Activated T-helper 1 cell treated with anti-CD3 and anti-CD28 coated beads, Interleukin-12 subunit alpha, Interleukin-12 subunit beta, Interleukin-2, Interleukin-4 antibody, amounts not matched to agents 30 ng/mL and 10 ng/mL and 1 ng/mL, durations not matched to agents 14 hours and 24 hours and 36 hours (primary cell): ENCODE measurements at regions of chr3 and their contacts with region 1.

Region 1: DNA sequence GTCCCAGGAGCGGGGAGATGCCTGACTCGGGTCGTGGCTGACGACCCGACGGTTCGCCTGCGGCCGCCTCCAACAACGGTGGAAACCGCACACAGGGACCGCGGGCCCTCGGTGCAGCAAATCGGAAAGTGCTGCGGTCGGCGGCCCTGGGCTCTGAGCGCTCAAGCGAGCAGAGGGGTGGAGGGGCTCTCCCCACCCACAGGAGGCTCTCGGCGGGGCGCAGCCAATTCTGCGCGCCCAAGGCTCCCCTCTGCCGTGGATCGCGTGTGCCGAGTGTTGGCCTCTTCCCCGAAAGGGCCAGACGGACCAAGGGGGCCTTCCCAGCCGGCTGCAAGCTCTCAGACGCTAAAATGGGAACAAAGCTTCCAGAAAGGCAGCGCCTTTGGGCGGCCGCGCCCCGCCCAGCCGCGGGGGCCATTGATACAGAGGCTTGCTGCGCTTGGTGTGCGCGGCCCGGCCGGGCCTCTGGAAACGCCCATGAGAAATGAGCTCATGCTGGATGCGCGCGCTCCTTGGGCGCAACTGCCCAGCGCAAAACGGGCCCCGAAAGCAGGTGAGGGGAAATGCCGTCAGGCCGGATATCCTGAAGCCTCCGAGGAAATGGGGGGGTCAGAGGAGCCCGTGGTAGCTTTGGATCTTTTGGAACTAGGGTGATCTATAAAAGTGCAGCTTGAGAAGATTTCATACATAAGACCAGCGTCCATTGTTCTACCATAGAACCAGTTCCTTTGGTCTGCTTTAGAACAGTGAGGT is 1.2 kb upstream of the GSK3B start:
- DNase-seq: peak; percentile 91
- H3K4me3 Mint-ChIP-seq: no peak overlapping the region
- H3K27ac Mint-ChIP-seq: no peak overlapping the region
- H3K4me1 Mint-ChIP-seq: peaks cover 19% of the 10 kb centered on the region
- H3K27me3 Mint-ChIP-seq: no peaks in the 10 kb centered on the region

Region 2: DNA sequence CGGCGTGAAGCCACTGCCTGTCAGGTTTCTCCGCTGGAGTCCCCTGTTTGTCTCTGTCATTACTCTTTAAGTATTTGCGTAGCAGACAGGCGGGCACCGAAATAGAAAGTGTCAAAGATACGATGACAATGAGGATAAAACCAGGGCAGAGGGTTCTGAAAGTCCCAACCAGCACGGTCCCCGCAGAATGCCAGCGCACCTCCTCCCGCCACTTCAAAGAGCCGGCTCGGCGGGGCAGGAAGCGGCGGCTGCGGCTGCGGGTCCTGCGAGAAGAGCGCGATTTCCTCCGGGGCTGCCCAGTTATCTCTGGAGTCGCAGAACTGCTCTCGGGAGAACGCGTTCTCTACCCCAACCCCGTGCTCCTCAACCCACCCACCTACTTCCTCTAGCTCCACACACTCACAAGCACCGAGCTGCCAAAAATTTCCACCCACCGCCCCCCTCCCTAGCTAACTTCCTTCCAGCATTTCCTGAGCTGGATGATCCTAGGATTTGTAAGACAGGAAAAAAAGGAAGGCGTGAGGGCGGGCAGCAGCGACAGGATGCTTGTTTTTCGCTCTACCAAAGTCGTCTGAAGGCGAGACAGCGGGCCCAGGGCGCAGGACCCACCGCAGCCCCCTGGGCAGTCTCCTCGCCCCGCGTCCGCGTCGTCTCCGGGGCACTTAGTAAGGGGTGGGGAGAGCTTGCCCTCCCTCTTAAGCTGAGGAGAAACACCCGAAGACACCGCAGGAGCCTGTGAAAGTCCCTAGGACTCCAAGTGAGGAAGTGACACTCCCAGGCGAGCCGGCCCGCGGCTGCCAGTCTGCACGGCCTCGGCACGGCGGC is 801.3 kb before region 1 on chr3 and contains the start of gene ARHGAP31:
- intact Hi-C with region 1: loop called (anchors 2 kb)
- DNase-seq: peak; percentile 82
- H3K4me3 Mint-ChIP-seq: peak within 1 kb of the TSS; percentile 85
- H3K27ac Mint-ChIP-seq: peak within 1 kb of the TSS; percentile 78
- H3K4me1 Mint-ChIP-seq: peaks cover 55% of the 10 kb centered on the region
- H3K27me3 Mint-ChIP-seq: peaks cover 42% of the 10 kb centered on the region
- total RNA-seq, gene ARHGAP31: 7.5 and 8.0 TPM in 2 replicates

Region 3: DNA sequence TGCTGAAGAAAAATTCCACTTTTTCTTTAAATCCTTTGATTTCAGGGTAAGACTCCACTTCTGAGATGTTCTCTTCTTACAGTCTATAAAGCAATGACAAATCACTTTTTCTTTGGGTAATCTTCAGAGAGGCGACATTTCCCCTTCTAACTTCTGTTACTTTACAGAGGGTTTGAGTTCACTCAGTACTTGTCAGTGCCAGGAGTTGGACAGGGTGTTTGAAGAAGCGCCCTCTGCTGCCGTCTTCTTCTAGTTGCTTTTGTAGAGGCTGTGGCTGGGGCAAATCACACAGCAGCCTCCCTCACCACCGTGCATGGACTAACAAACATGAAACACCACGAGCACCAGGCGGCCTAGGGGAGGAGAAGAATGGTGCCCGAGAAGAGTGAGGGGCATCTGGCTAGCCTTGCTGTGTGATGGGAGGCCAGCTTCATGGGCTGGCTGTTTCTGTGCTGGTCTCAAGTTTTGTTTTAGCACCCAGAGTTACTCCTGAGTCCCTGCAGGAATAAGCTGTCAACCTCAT is 535.9 kb before region 1 on chr3 and contains the start of gene CD80:
- intact Hi-C with region 1: loop called (anchors 10 kb)
- DNase-seq: peak; percentile 67
- H3K4me3 Mint-ChIP-seq: peak within 1 kb of the TSS; percentile 79
- H3K27ac Mint-ChIP-seq: peak within 1 kb of the TSS; percentile 88
- H3K4me1 Mint-ChIP-seq: peaks cover 73% of the 10 kb centered on the region
- H3K27me3 Mint-ChIP-seq: peaks cover 4% of the 10 kb centered on the region
- total RNA-seq, gene CD80: 18.1 and 19.5 TPM in 2 replicates

Region 4: GRCh38 chr3:119912220-119912619 is 183.2 kb before region 1 on chr3:
- intact Hi-C with region 1: loop called (anchors 1 kb)
- DNase-seq: no peak
- H3K4me3 Mint-ChIP-seq: no peak overlapping the region
- H3K27ac Mint-ChIP-seq: peak overlapping the region; percentile 59
- H3K4me1 Mint-ChIP-seq: peaks cover 21% of the 10 kb centered on the region
- H3K27me3 Mint-ChIP-seq: peaks cover 1% of the 10 kb centered on the region

Region 5: GRCh38 chr3:120417272-120417911 is 322.0 kb after region 1 on chr3:
- intact Hi-C with region 1: loop called (anchors 1 kb)
- DNase-seq: peak; percentile 78
- H3K4me3 Mint-ChIP-seq: peak overlapping the region; percentile 84
- H3K27ac Mint-ChIP-seq: no peak overlapping the region
- H3K4me1 Mint-ChIP-seq: peaks cover 22% of the 10 kb centered on the region
- H3K27me3 Mint-ChIP-seq: peaks cover 2% of the 10 kb centered on the region

Region 6: DNA sequence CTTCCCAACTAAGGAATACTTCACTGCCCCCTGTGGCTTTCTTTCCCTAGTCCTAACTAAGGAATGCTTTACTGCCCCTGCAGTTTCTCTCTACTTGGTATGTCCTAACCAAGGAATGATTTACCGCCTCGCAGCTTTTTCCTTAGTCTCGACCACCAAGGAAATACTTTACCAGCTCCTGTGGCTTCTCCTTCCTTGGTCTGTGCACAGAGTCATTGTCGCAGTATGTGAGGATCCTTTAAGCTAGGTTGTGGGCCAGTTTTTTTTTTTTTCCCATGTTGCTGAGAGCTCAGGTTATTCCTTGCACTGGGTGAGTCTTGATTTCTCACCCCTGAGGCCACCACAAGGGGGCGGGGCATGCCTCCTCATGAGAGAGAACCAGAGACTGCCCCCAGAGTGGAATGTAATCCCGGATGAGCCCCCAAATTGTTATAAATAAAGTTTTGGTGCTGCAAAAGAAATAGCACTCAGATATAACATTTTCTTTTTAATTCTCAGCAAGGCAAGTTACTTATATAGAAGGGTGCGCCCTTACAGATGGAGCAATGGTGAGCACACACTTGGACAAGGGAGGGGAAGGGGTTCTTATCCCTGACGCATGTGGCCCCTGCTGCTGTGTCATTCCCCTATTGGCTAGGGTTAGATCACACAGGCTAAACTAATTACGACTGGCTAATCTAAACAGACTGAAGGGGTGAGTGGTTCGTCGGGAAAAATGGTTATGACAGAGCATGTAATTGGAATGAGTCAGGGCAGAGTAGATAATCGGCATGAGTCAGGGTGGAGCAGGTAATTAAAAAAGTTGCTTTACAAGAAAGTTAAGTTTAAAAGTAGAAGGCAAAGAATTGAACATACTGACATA is 527.7 kb after region 1 on chr3:
- intact Hi-C with region 1: no loop called
- DNase-seq: no peak
- H3K4me3 Mint-ChIP-seq: no peak overlapping the region
- H3K27ac Mint-ChIP-seq: no peak overlapping the region
- H3K4me1 Mint-ChIP-seq: no peaks in the 10 kb centered on the region
- H3K27me3 Mint-ChIP-seq: no peaks in the 10 kb centered on the region

Region 7: DNA sequence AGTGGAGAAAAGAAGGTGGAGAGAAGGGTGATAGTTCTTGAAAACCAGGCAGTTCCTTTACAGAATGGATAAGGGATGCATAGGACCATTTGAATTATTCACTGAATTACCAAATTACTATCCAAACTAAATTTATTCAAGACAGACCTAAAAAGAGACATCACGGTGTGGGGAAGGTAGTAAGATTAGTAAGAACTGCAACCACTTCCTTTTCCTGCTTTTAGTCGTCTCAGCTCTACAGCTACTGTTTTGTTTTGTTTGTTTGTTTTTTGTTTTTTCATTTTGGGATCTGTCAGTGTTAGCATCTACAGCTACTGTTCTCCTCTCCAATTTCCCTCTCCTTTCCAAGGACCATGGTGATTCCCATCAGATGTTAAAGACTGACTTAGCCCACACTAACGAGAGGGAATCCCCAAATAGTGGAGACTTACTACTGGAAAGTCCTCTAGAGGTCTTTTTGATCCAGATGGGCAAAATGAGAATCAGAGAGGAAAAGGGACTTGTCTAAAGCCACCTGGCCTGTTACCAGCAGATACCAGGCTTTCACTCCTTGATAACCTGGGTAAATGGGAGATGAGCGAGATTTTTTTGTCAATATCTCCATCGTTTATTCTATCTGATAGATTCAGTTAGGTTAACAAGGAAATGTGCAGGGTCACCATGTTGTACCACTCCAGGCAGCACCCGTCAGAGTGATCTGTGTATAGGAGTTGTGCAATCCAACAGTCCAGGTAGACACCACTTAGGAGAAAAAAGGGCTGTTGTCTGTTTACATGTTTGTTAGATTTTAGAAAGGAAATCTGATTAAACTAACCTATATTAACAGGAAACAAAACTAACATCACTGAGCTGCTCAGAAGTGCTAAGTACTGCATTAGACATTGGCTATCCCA is 1559.3 kb after region 1 on chr3:
- intact Hi-C with region 1: loop called (anchors 5 kb)
- DNase-seq: peak; percentile 9
- H3K4me3 Mint-ChIP-seq: peak overlapping the region; percentile 50
- H3K27ac Mint-ChIP-seq: peak overlapping the region; percentile 79
- H3K4me1 Mint-ChIP-seq: peaks cover 87% of the 10 kb centered on the region
- H3K27me3 Mint-ChIP-seq: no peaks in the 10 kb centered on the region